A549 (cell line): ENCODE measurements at regions of chr19 and their contacts with region 1.

Region 1: DNA sequence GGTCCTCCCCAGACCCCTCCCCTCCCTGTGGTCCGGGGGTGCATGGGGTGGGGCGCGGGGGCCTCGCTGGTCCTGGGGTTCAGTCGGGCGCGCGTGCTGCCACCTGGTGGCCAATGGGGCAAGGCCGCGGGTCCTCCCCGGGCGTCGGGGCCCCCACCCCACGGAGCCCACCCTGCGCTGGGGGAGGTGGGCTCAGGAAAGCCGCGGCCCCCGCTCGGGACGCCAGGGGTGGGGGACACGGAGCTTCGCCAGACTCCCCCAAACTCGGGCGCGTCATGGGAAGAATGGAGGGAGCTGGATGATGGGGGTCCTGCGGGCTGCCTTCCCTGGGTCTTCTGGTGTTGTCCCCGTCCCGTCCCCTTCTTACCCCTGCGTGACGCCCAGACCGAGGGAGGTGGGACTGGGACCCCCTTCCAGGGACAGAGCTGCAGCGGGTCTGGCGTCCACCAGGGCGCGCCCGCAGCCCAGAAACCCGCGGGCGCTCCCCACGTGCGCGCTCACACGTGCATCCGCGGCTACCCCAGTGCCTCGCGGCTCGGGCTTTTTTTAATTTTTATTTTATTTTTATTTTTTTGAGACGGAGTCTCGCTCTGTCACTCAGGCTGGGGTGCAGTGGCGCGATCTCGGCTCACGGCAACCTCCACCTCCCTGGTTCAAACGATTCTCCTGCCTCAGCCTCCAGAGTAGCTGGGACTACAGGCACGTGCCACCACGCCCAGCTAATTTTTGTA is 19.8 kb upstream of the TCF3 start:
- DNase-seq: peak in 1 of 2 experiments; percentile 31
- ATAC-seq: peak; percentile 63 to 74; a peak in 4 of 6 replicates
- H3K4me3 ChIP-seq: peak overlapping the region; percentile 49
- H3K27ac ChIP-seq: peak overlapping the region; percentile 74 to 91
- H3K4me1 ChIP-seq: peaks cover 9% of the 10 kb centered on the region; the same call in 1 of the 3 replicates
- CTCF ChIP-seq: peak; percentile 79
- EP300 ChIP-seq: no peak
- POLR2A ChIP-seq: no peak
- RAD21 ChIP-seq: peak; percentile 80 to 96

Region 2: DNA sequence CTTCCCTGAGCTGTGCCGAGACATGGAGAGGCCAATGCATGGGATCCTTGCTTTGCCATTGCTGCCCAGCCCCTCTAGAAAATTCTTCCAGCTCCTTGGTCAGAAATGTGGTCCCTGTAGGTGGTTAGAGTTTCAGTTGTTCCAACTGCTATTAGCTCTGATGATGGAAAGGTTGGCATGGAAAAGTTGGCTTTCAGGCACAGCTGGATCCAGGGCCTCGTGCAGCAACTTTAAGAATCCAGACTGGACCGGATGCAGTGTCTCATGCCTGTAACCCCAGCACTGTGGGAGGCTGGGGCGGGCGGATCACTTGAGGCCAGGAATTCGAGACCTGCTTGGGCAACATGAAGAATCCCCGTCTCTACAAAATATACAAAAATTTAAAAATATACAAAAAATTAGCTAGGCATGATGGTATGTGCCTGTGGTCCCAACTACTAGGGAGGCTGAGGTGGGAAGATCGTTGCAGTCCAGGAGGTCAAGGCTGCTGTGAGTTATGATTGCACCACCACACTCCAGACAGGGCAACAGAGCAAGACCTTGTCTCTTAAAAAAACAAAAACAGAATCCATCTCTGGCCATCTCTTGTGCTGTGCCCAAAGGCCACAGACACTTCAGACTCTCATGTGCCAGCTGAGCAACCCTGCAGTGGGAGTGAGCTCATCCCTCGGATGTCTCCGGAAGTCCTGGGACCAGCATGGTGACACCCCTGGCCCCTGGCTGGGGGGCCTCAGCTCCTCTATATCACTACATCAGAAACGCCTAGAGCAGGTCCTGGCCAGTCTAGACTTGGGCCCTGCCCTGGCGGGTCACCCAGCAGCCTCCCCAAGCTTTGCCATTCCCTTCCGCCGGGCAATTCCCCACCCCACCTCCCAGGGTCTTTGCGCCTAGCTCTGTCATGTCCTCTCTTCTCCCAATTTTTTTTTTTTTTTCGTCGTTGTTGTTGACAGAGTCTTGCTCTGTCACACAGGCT is 120.8 kb before region 1 on chr19:
- CTCF ChIA-PET with region 1: interaction called, 21 read pairs
- POLR2A ChIA-PET with region 1: no interaction called
- DNase-seq: no peak
- ATAC-seq: no peak
- H3K4me3 ChIP-seq: no peak overlapping the region
- H3K27ac ChIP-seq: no peak overlapping the region
- H3K4me1 ChIP-seq: no peaks in the 10 kb centered on the region
- CTCF ChIP-seq: no peak
- EP300 ChIP-seq: no peak
- POLR2A ChIP-seq: no peak
- RAD21 ChIP-seq: no peak

Region 3: DNA sequence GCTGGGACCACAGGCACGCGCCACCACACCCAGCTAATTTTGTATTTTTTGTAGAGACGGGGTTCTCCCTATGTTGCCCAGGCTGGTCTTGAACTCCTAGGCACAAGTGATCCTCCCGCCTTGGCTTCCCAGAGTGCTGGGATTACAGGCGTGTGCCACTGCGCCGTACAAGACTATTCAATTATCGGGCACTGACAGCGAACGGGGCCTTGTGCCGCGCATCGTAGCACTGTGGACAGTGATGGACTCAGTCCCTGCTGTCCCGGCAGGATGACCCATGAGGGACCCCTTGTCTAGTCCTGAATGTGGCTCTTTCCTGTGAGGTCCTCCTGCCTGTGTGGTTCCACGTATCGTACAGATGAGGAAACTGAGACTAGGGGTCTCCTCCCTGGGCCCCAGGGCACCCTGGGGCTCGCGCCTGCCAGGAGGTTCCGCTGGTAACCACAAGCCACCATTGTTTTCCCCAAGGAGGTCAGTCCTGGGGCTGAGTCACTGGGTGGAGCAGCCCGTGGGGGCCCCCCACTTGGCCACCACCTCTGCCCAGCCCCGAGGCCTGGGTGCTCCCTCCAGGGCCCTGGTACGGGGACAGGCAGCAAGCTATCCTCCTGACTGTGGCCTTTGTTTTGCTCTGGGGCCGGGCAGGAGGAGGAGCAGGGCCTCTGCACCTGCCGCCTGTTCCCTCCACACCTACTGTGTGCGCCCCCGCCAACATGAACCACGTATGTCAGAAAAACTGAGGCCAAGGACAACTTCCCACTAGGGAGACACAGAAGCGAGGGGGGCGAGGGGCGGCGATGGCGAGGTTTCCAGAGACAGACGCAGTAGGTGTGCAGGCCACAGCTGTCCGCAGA is 16.8 kb before region 1 on chr19:
- CTCF ChIA-PET with region 1: interaction called, 14 read pairs
- POLR2A ChIA-PET with region 1: no interaction called
- DNase-seq: no peak
- ATAC-seq: no peak
- H3K4me3 ChIP-seq: no peak overlapping the region
- H3K27ac ChIP-seq: 0 out of 6 replicates have a peak overlapping the region, but pooled peaks of 1 of the 2 experiments have one; percentile 10
- H3K4me1 ChIP-seq: peaks cover 15% of the 10 kb centered on the region
- CTCF ChIP-seq: no peak
- EP300 ChIP-seq: no peak
- POLR2A ChIP-seq: no peak
- RAD21 ChIP-seq: no peak

Region 4: DNA sequence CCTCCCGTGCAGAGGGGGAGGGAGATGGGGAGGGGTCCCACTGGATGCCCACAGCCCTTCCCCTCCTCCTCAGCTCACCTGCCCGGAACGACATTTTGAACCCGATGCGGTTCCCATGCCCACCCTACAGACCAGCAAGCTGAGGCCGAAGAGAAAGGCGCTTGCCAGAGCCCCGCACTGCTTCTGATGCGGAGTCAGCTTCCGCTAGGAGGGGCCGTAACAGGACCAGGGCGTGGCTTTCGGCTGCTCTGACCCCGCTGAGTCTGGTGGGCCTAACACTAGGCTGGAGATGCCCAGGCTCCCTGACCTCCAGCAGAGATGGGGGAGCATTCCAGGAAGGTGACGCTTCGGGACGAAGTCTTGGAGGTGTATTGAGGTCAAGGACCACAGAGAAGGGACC is 87.8 kb after region 1 on chr19:
- CTCF ChIA-PET with region 1: interaction called, 66 read pairs
- POLR2A ChIA-PET with region 1: no interaction called
- DNase-seq: no peak
- ATAC-seq: peak in 1 of 2 experiments; percentile 43; a peak in 2 of 6 replicates
- H3K4me3 ChIP-seq: no peak overlapping the region
- H3K27ac ChIP-seq: no peak overlapping the region
- H3K4me1 ChIP-seq: peaks cover 10% of the 10 kb centered on the region; the same call in 2 of the 3 replicates
- CTCF ChIP-seq: no peak
- EP300 ChIP-seq: no peak
- POLR2A ChIP-seq: no peak
- RAD21 ChIP-seq: no peak

Region 5: DNA sequence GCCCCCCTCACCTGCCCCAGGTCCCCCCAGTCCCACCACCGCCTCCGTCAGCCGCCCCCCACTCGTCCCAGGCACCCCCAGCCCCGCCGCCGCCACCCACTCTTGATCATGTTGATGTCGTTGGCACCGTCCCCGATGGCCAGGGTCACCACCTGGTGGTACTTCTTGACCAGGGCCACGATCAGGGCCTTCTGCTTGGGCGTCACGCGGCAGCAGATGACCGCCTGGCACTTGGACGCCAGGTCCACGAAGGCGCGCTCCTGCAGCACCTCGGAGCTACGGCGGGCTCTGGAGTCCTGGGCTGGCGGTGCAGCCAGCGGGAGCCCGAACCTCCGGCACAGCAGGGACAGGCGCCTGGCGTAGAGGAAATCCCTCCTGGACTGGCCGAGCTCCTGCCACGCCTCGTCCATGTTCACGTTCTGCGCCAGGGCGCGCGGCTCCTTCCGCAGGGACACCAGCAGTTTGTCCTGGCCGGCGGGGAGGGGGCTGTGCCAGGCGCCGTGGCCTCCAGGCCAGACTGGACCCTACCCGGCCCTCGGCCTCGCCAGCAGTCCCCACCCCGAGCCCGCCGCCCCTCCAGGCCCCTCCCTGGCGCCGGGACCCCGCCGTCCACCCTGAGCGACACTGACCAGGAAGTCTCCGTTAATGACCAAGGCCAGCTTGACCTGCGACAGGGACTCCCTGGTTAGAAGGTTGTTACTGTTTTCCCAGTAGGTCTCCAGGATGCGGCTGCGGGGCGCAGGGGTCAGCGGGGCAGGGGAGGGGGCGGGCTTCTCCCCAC is 117.2 kb after region 1 on chr19:
- CTCF ChIA-PET with region 1: interaction called, 146 read pairs
- POLR2A ChIA-PET with region 1: no interaction called
- DNase-seq: peak in 1 of 2 experiments; percentile 60
- ATAC-seq: peak; percentile 43 to 66; a peak in 5 of 6 replicates
- H3K4me3 ChIP-seq: peak overlapping the region; percentile 40
- H3K27ac ChIP-seq: peak overlapping the region; percentile 54 to 84; a peak in 5 of 6 replicates
- H3K4me1 ChIP-seq: no peaks in the 10 kb centered on the region
- CTCF ChIP-seq: no peak
- EP300 ChIP-seq: no peak
- POLR2A ChIP-seq: no peak
- RAD21 ChIP-seq: no peak

Region 6: DNA sequence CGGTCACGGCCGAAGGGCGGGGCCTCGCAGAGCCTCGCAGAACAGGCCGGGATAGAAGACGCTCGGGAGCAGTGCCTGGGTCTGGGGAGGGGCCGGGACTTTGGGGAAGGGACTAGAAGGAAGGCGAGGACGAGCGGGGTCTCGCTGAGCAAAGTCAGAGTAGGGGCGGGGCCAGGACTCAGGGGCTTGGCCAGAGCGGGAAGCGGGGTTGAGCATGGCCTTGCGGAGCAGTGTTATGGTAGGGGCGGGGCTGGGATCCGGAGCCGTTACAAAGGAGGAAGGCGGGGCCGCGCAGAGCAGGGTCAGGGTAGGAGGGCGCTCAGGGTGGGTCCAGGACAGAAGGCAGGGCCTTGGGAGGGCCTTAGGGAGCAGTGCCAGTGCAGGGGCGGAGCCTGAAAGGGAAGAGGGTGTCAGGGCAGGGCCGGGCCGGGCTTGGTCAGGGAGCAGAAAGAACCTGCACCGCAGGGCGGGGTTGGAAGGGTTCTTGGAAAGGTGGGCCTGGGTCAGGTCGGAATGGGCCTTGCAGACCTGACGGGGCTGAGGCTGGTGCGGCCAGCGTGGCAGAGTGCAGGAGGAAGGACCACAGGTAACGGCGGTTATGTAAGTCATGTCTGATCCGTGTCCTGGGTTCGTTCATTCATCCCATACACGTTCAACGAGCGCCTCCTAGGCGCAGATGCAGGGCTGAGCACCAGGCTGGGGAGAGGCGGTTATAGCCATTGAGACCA is 140.4 kb after region 1 on chr19:
- CTCF ChIA-PET with region 1: interaction called, 17 read pairs
- POLR2A ChIA-PET with region 1: no interaction called
- DNase-seq: peak; percentile 88 to 97
- ATAC-seq: peak; percentile 79 to 91
- H3K4me3 ChIP-seq: peak overlapping the region; percentile 81
- H3K27ac ChIP-seq: peak overlapping the region; percentile 92 to 96
- H3K4me1 ChIP-seq: peaks cover 13% of the 10 kb centered on the region
- CTCF ChIP-seq: peak; percentile 63
- EP300 ChIP-seq: no peak
- POLR2A ChIP-seq: no peak; the same call in 1 of the 2 replicates
- RAD21 ChIP-seq: peak; percentile 75 to 78